Activated CD4-positive, alpha-beta T cell treated with anti-CD3 and anti-CD28 coated beads, Interleukin-2, amount 10 ng/mL, durations not matched to agents 24 days and 14 days (primary cell): ENCODE measurements at regions of chr15 and their contacts with region 1.

Region 1: GRCh38 chr15:68795298-68795848 is 25.3 kb downstream of the ANP32A start:
- DNase-seq: peak; percentile 93
- H3K4me3 Mint-ChIP-seq: peak overlapping the region; percentile 73
- H3K27ac Mint-ChIP-seq: peak overlapping the region; percentile 71
- H3K4me1 Mint-ChIP-seq: peaks cover 90% of the 10 kb centered on the region
- H3K27me3 Mint-ChIP-seq: no peaks in the 10 kb centered on the region

Region 2: DNA sequence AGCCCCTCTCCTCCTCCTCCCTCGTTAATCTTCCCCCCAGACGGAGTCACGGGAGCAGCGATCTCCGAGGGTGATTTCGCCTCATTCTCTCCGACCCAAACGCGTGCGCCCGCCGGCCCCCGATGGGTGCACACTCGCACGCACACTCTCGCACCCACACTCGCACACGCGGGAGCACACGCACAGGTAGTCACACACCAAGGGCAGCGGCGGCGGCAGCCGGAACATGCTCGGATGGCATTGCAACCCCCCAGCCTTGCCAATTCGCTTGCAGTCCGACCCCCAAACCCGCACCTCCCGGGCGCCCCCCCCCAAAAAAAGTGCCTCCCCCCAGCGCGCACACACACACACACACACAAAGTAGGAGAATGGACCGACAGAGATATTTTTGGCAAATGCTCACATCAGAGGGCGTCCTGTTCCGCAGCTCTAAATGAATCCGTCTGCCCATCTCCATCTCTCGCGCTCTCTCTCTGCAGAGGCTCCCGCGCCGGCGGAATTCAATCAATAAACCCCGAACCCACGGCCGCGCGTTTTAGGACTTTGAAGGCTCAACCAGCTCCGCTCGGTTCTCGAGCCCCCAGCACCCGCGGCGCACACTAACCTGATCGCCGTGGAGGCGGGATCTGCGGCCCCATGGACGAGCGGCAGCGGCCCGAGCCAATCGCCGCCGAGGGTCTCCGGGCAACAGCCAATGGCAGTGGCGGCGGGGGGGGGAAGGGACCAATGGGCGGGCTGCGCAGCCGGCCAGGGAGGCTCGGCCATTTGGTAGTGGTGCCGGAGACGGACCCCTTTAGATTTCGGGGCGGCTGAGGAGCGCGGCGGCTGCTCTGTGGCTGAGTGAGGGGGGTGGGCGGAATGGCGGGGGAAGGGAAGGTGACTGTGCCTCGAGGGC is 25.2 kb after region 1 on chr15 and contains the start of gene ANP32A:
- intact Hi-C with region 1: loop called (anchors 1 kb)
- DNase-seq: peak; percentile 99
- H3K4me3 Mint-ChIP-seq: peak within 1 kb of the TSS; percentile 93
- H3K27ac Mint-ChIP-seq: peak within 1 kb of the TSS; percentile 96
- H3K4me1 Mint-ChIP-seq: peaks cover 30% of the 10 kb centered on the region
- H3K27me3 Mint-ChIP-seq: no peaks in the 10 kb centered on the region
- total RNA-seq, gene ANP32A: 280 and 302 TPM in 2 replicates

Region 3: GRCh38 chr15:68829068-68829467 is 33.7 kb after region 1 on chr15:
- intact Hi-C with region 1: loop called (anchors 5 kb)
- DNase-seq: peak; percentile 76
- H3K4me3 Mint-ChIP-seq: no peak overlapping the region
- H3K27ac Mint-ChIP-seq: no peak overlapping the region
- H3K4me1 Mint-ChIP-seq: peaks cover 15% of the 10 kb centered on the region
- H3K27me3 Mint-ChIP-seq: peaks cover 8% of the 10 kb centered on the region